Activated T-helper 2 cell treated with anti-CD3 and anti-CD28 coated beads, Interferon-gamma antibody, Interleukin-2, Interleukin-4, amounts not matched to agents 10 μg/mL and 5 μg/mL and 100 μg/mL, durations not matched to agents 14 hours and 24 hours and 36 hours (primary cell): ENCODE measurements at regions of chr3 and their contacts with region 1.

Region 1: DNA sequence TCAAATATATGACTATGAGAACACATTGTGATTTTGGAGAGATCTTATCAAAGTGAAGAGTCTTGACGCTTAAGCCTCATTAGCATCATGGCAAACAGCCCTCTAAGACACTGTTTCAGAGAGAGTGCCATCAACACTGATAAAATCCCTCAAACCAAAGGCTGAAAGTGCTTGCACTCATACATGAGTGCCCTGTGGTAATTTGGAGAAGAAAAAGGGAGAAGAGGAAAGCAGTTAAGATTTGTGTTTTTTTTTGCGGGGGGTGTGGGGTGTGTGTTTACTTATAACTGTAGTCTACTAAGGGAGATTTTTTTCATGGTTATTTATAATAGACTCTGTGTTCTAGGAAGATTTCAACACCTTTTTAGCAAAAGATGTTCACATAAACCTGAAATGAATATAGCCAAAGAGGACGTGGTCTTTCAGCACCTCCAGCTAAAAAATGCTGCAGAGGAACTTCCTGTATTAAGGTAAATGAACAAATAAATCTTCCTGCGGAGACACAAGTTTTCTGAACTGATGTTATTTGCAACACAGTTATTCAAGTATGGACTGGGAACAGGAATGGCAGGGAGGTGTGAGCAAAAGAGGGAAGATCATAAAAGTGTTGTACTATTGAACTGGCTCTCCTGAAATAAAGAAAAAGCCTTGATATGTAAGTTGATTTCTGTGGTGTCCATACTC is 81.9 kb upstream of the TGFBR2 start:
- DNase-seq: no peak
- H3K4me3 Mint-ChIP-seq: no peak overlapping the region
- H3K27ac Mint-ChIP-seq: no peak overlapping the region
- H3K4me1 Mint-ChIP-seq: peaks cover 9% of the 10 kb centered on the region
- H3K27me3 Mint-ChIP-seq: peaks cover 7% of the 10 kb centered on the region

Region 2: DNA sequence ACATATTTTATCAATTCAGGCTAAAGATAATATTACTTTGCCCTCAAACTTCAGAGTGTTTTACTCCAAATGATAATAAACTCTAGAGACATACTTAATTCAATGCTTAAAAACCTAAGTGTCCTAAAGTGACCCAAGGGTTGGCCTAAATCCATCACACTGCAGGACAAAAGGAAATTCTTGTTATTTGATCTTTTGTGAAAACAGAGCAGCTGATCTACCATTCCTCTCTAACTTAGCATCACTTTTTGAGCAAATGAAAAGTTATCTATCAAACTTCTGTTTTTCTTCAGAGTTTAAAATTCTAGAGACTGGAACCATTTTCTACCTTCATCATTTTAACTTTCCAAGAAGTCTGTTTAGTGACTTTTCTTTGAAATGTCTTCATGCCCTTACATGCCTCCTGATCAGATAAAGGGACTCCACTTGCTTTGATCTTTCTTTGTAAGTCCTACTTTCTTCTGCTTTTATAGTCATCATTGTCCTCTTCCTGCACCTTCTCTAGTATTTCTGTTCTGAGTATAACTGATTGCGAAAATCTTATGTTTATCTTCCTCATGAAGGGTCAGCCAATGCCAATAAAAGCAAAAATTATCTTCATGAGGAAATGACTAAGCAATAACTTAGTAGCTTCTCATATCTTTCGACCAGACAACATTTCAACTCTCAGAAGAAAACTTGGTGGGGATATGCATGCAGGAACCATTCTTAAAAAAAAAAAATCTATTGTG is 296.8 kb before region 1 on chr3:
- intact Hi-C with region 1: loop called (anchors 5 kb)
- DNase-seq: no peak
- H3K4me3 Mint-ChIP-seq: no peak overlapping the region
- H3K27ac Mint-ChIP-seq: peak overlapping the region; percentile 19
- H3K4me1 Mint-ChIP-seq: peaks cover 24% of the 10 kb centered on the region
- H3K27me3 Mint-ChIP-seq: no peaks in the 10 kb centered on the region